CD8-positive, alpha-beta T cell (primary cell): ENCODE measurements at regions of chr3 and their contacts with region 1.

Region 1: GRCh38 chr3:89372456-89372855 is 265.0 kb downstream of the EPHA3 start:
- DNase-seq: no peak
- ATAC-seq: no peak
- H3K4me3 ChIP-seq: no peak overlapping the region
- H3K4me3 Mint-ChIP-seq: no peak overlapping the region
- H3K27ac ChIP-seq: no peak overlapping the region
- H3K27ac Mint-ChIP-seq: no peak overlapping the region
- H3K4me1 ChIP-seq: no peaks in the 10 kb centered on the region
- H3K4me1 Mint-ChIP-seq: no peaks in the 10 kb centered on the region
- H3K27me3 ChIP-seq: no peaks in the 10 kb centered on the region
- H3K27me3 Mint-ChIP-seq: no peaks in the 10 kb centered on the region
- CTCF ChIP-seq: no peak

Region 2: GRCh38 chr3:89340408-89340807 is 32.0 kb before region 1 on chr3:
- CTCF ChIA-PET with region 1: no interaction called
- POLR2A ChIA-PET with region 1: no interaction called
- intact Hi-C with region 1: loop called in 1 of 2 experiments (anchors 1 kb)
- DNase-seq: no peak
- ATAC-seq: no peak
- H3K4me3 ChIP-seq: no peak overlapping the region
- H3K4me3 Mint-ChIP-seq: no peak overlapping the region
- H3K27ac ChIP-seq: no peak overlapping the region
- H3K27ac Mint-ChIP-seq: no peak overlapping the region
- H3K4me1 ChIP-seq: no peaks in the 10 kb centered on the region
- H3K4me1 Mint-ChIP-seq: no peaks in the 10 kb centered on the region
- H3K27me3 ChIP-seq: no peaks in the 10 kb centered on the region
- H3K27me3 Mint-ChIP-seq: no peaks in the 10 kb centered on the region
- CTCF ChIP-seq: no peak